ENCODE measurements at regions of chr17 and their contacts with region 1.

Region 1: GRCh38 chr17:46179375-46179999 is 13.7 kb downstream of the KANSL1 start:
- DNase-seq: no peak
- ATAC-seq: no peak
- H3K4me3 ChIP-seq: no peak overlapping the region
- H3K27ac ChIP-seq: no peak overlapping the region
- H3K4me1 ChIP-seq: peaks cover 70% of the 10 kb centered on the region
- H3K27me3 ChIP-seq: no peaks in the 10 kb centered on the region
- CTCF ChIP-seq: no peak

Region 2: GRCh38 chr17:46061435-46061834 is 118.1 kb before region 1 on chr17:
- intact Hi-C with region 1: loop called (anchors 5 kb)
- DNase-seq: no peak
- ATAC-seq: peak in 1 of 4 donors; percentile 45
- H3K4me3 ChIP-seq: no peak overlapping the region
- H3K27ac ChIP-seq: peak overlapping the region; percentile 10
- H3K4me1 ChIP-seq: peaks cover 37% of the 10 kb centered on the region
- H3K27me3 ChIP-seq: no peaks in the 10 kb centered on the region
- CTCF ChIP-seq: peak; percentile 32

Region 3: DNA sequence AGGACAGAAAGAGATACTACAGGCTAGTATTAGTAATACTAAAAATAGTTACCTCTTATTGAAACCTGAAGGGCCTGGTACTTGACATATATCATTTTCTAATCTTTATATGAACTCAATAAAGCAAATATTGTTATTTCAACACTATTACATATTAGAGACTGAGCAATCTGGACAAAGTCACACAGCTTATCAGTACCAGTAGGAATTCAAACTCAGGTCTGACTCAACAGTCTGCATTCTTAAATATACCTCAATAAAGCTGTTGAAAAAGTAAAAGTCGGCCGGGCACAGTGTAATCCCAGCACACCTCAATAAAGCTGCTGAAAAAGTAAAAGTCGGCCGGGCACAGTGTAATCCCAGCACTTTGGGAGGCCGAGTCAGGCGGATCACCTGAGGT is 53.7 kb before region 1 on chr17:
- intact Hi-C with region 1: loop called in 1 of 2 experiments (anchors 5 kb)
- DNase-seq: no peak
- ATAC-seq: no peak
- H3K4me3 ChIP-seq: no peak overlapping the region
- H3K27ac ChIP-seq: no peak overlapping the region
- H3K4me1 ChIP-seq: peaks cover 85% of the 10 kb centered on the region
- H3K27me3 ChIP-seq: no peaks in the 10 kb centered on the region
- CTCF ChIP-seq: no peak

Region 4: GRCh38 chr17:46139432-46140210 is 39.9 kb before region 1 on chr17:
- intact Hi-C with region 1: loop called in 1 of 2 experiments (anchors 5 kb)
- DNase-seq: no peak
- ATAC-seq: peak; percentile 27 to 80 (median 62)
- H3K4me3 ChIP-seq: no peak overlapping the region
- H3K27ac ChIP-seq: peak overlapping the region; percentile 34
- H3K4me1 ChIP-seq: peaks cover 84% of the 10 kb centered on the region
- H3K27me3 ChIP-seq: no peaks in the 10 kb centered on the region
- CTCF ChIP-seq: no peak